T-cell (primary cell): ENCODE measurements at regions of chr4 and their contacts with region 1.

Region 1: GRCh38 chr4:39574946-39575345 is 47.7 kb upstream of the UGDH start:
- DNase-seq: no peak
- ATAC-seq: no peak
- H3K4me3 ChIP-seq: no peak overlapping the region
- H3K4me3 Mint-ChIP-seq: no peak overlapping the region
- H3K27ac ChIP-seq: no peak overlapping the region
- H3K27ac Mint-ChIP-seq: no peak overlapping the region
- H3K4me1 ChIP-seq: no peaks in the 10 kb centered on the region
- H3K4me1 Mint-ChIP-seq: no peaks in the 10 kb centered on the region
- H3K27me3 ChIP-seq: no peaks in the 10 kb centered on the region
- H3K27me3 Mint-ChIP-seq: no peaks in the 10 kb centered on the region

Region 2: DNA sequence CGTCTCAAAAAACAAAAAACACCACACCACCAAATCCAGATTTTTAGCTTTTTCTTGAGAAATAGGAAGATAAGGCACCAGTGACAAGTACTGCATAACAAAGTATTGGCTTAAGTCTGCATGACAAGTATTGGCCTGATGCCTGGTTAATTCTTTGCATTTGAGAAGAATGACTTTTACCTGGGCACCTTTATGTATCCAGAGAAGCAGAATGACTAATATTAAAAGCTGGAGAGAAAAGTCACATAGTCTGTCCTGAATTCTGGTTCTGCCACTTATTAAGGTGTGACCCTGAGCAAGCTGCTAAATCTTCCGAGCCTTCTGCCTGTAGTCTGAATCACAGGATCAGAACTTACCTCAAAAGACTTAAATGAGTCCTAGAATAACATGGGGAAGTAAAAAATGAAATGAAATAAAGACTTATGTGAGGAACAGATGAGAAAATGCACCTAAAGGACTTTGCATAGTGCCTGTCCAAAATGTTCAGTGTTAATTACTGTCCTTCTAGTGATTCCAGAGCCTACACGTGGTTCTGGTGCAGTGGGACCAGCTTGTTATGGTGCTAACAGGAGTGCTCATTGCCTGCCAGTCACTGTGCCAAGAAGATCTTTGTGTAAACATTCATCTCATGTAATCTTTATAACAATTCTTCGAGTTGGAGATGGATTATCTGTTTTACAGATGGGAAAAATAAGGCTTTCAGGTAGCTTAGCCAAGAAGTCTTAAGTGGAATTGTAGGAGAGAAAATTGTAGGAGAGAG is 79.3 kb before region 1 on chr4:
- CTCF ChIA-PET with region 1: interaction called in 1 of 2 experiments, 12 read pairs
- POLR2A ChIA-PET with region 1: no interaction called
- DNase-seq: no peak
- ATAC-seq: no peak
- H3K4me3 ChIP-seq: no peak overlapping the region
- H3K4me3 Mint-ChIP-seq: no peak overlapping the region
- H3K27ac ChIP-seq: no peak overlapping the region
- H3K27ac Mint-ChIP-seq: no peak overlapping the region
- H3K4me1 ChIP-seq: no peaks in the 10 kb centered on the region
- H3K4me1 Mint-ChIP-seq: no peaks in the 10 kb centered on the region
- H3K27me3 ChIP-seq: no peaks in the 10 kb centered on the region
- H3K27me3 Mint-ChIP-seq: no peaks in the 10 kb centered on the region

Region 3: DNA sequence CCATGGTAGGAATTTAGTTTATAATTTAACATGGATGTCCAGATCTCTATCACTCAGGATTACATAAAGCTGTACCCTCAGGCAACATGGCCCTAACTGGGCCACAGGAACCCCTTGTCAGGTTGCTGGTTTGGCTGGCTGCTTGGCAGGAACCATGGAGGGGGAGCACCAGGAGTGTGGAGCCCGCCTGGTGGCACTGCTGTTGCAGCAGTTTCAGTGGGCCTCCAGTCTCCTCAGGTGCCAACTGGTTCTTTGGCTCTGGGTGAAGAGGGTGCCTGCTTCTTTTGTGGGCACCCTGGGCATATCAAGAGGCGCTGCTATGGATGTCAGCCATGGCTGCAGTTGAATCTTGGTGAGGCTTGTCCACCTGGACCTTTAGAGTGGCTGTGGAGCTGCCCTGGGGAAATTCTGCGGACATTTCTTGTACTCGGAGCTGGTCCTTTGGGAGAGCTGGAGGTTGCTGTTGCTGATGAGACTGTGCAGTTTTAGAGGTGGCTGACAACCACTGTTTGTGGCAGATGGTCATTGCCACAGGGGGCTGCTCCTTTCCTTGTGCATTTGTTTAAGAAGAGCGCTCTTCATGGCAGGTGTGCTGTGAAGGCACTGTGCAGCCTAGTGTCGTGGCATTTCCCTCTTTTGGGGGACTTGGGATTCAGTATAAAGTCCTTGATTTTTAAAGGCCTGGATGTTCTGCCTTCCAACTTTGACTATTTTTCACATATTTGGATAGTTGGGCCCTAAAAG is 74.0 kb after region 1 on chr4:
- CTCF ChIA-PET with region 1: no interaction called
- POLR2A ChIA-PET with region 1: no interaction called
- DNase-seq: no peak
- ATAC-seq: no peak
- H3K4me3 ChIP-seq: no peak overlapping the region
- H3K4me3 Mint-ChIP-seq: no peak overlapping the region
- H3K27ac ChIP-seq: no peak overlapping the region
- H3K27ac Mint-ChIP-seq: no peak overlapping the region
- H3K4me1 ChIP-seq: no peaks in the 10 kb centered on the region
- H3K4me1 Mint-ChIP-seq: no peaks in the 10 kb centered on the region
- H3K27me3 ChIP-seq: peaks cover 0 to 2% of the 10 kb centered on the region in 2 experiments
- H3K27me3 Mint-ChIP-seq: no peaks in the 10 kb centered on the region